T-cell (primary cell): ENCODE measurements at regions of chr5 and their contacts with region 1.

Region 1: GRCh38 chr5:64722588-64722987 is 32.3 kb downstream of the SHISAL2B start:
- DNase-seq: no peak
- ATAC-seq: no peak
- H3K4me3 ChIP-seq: no peak overlapping the region
- H3K4me3 Mint-ChIP-seq: no peak overlapping the region
- H3K27ac ChIP-seq: no peak overlapping the region
- H3K27ac Mint-ChIP-seq: no peak overlapping the region
- H3K4me1 ChIP-seq: no peaks in the 10 kb centered on the region
- H3K4me1 Mint-ChIP-seq: no peaks in the 10 kb centered on the region
- H3K27me3 ChIP-seq: no peaks in the 10 kb centered on the region
- H3K27me3 Mint-ChIP-seq: no peaks in the 10 kb centered on the region

Region 2: DNA sequence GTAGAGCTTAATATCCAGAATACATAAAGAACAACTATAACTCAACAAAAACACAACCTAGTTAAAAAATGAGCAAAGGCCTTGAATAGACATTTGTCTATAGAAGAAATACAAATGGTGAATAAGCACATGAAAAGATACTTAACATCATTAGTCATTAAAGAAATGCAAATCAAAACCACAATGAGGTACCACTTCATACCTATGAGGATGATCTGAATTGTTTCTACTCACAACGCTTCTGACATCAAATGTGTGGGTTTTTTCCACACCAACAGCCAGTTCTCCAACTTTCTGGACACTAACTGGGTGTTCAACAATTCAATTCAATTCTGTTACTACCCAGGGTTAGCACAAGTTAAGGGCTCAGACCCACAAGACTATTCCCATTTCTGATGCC is 23.9 kb after region 1 on chr5:
- CTCF ChIA-PET with region 1: no interaction called
- POLR2A ChIA-PET with region 1: interaction called in 1 of 2 experiments, 13 read pairs
- DNase-seq: no peak
- ATAC-seq: no peak
- H3K4me3 ChIP-seq: no peak overlapping the region
- H3K4me3 Mint-ChIP-seq: no peak overlapping the region
- H3K27ac ChIP-seq: no peak overlapping the region
- H3K27ac Mint-ChIP-seq: no peak overlapping the region
- H3K4me1 ChIP-seq: no peaks in the 10 kb centered on the region
- H3K4me1 Mint-ChIP-seq: peaks cover 0 to 2% (median 2%) of the 10 kb centered on the region in 3 donors
- H3K27me3 ChIP-seq: no peaks in the 10 kb centered on the region
- H3K27me3 Mint-ChIP-seq: no peaks in the 10 kb centered on the region